ENCODE measurements at regions of chr6 and their contacts with region 1.

Region 1: GRCh38 chr6:124703541-124703940 is 258.7 kb upstream of the RNF217 start:
- DNase-seq: no peak
- H3K4me3 ChIP-seq: no peak overlapping the region
- H3K27ac ChIP-seq: no peak overlapping the region
- H3K4me1 ChIP-seq: no peaks in the 10 kb centered on the region
- H3K27me3 ChIP-seq: no peaks in the 10 kb centered on the region
- CTCF ChIP-seq: no peak
- POLR2A ChIP-seq: no peak

Region 2: GRCh38 chr6:124334359-124334758 is 369.2 kb before region 1 on chr6:
- intact Hi-C with region 1: loop called (anchors 10 kb)
- DNase-seq: no peak
- H3K4me3 ChIP-seq: no peak overlapping the region
- H3K27ac ChIP-seq: no peak overlapping the region
- H3K4me1 ChIP-seq: no peaks in the 10 kb centered on the region
- H3K27me3 ChIP-seq: no peaks in the 10 kb centered on the region
- CTCF ChIP-seq: no peak
- POLR2A ChIP-seq: no peak

Region 3: GRCh38 chr6:124683507-124683906 is 20.0 kb before region 1 on chr6:
- intact Hi-C with region 1: no loop called
- DNase-seq: no peak
- H3K4me3 ChIP-seq: no peak overlapping the region
- H3K27ac ChIP-seq: no peak overlapping the region
- H3K4me1 ChIP-seq: no peaks in the 10 kb centered on the region
- H3K27me3 ChIP-seq: no peaks in the 10 kb centered on the region
- CTCF ChIP-seq: no peak
- POLR2A ChIP-seq: no peak

Measured in vagina (tissue), 2 donors.